H1 (cell line): ENCODE measurements at regions of chr4 and their contacts with region 1.

Region 1: GRCh38 chr4:140359562-140360427 is 13.7 kb upstream of the SCOC start:
- DNase-seq: peak; percentile 47 to 88
- H3K4me3 ChIP-seq: no peak overlapping the region
- H3K27ac ChIP-seq: no peak overlapping the region
- H3K4me1 ChIP-seq: no peaks in the 10 kb centered on the region
- H3K27me3 ChIP-seq: peaks cover 0 to 2% (median 0%) of the 10 kb centered on the region in 4 experiments; a peak in 1 of 7 replicates
- CTCF ChIP-seq: peak; percentile 66 to 91 (median 83)
- EP300 ChIP-seq: no peak
- POLR2A ChIP-seq: no peak
- RAD21 ChIP-seq: peak; percentile 63 to 68

Region 2: DNA sequence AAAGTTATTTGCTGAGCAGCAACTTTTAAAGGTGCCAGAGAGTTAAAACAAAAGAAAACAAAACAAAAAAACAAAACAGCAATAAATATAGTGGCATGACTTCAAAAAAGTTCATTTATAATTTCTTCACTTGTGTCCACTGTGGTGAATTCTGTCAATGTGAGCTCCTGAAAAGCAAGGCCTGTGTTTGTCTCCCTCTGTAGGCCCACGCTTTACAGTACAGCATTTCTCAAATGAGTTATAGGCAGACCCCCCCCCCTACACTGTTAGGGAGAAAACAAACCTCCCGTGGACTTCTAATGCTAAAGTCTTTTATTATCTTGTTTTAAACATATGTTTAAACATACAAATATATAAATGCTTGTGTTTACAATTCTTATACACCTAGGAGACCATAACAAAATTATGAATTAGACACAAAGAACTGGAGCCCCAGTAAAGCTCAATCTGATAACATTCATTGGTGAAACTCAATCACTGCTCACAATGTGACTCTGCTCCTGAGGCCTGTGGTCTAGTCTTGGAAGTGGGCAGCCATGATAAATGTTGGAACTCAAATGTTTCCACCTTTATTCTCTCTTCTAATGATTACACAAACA is 33.3 kb before region 1 on chr4:
- CTCF ChIA-PET with region 1: interaction called, 23 read pairs
- POLR2A ChIA-PET with region 1: no interaction called
- DNase-seq: no peak
- H3K4me3 ChIP-seq: no peak overlapping the region
- H3K27ac ChIP-seq: no peak overlapping the region
- H3K4me1 ChIP-seq: no peaks in the 10 kb centered on the region
- H3K27me3 ChIP-seq: no peaks in the 10 kb centered on the region
- CTCF ChIP-seq: peak; percentile 11 to 63 (median 63)
- EP300 ChIP-seq: no peak
- POLR2A ChIP-seq: no peak
- RAD21 ChIP-seq: peak; percentile 77 to 81

Region 3: GRCh38 chr4:140373328-140374129 is 13.7 kb after region 1 on chr4 and contains the start of gene SCOC:
- CTCF ChIA-PET with region 1: interaction called, 41 read pairs
- POLR2A ChIA-PET with region 1: no interaction called
- DNase-seq: peak; percentile 94 to 99
- H3K4me3 ChIP-seq: peak within 1 kb of the TSS; percentile 86 to 96 (median 92)
- H3K27ac ChIP-seq: peak within 1 kb of the TSS; percentile 74
- H3K4me1 ChIP-seq: peaks cover 0 to 4% (median 0%) of the 10 kb centered on the region in 4 experiments; a peak in 2 of 7 replicates
- H3K27me3 ChIP-seq: no peaks in the 10 kb centered on the region
- CTCF ChIP-seq: no peak
- EP300 ChIP-seq: 0 out of 3 replicates have a peak, but pooled peaks of 1 of the 2 experiments have one; percentile 6
- POLR2A ChIP-seq: peak in 1 of 2 experiments; percentile 84; a peak in 2 of 3 replicates
- RAD21 ChIP-seq: no peak
- total RNA-seq, gene SCOC: 33.1 and 33.4 TPM in 2 replicates

Region 4: DNA sequence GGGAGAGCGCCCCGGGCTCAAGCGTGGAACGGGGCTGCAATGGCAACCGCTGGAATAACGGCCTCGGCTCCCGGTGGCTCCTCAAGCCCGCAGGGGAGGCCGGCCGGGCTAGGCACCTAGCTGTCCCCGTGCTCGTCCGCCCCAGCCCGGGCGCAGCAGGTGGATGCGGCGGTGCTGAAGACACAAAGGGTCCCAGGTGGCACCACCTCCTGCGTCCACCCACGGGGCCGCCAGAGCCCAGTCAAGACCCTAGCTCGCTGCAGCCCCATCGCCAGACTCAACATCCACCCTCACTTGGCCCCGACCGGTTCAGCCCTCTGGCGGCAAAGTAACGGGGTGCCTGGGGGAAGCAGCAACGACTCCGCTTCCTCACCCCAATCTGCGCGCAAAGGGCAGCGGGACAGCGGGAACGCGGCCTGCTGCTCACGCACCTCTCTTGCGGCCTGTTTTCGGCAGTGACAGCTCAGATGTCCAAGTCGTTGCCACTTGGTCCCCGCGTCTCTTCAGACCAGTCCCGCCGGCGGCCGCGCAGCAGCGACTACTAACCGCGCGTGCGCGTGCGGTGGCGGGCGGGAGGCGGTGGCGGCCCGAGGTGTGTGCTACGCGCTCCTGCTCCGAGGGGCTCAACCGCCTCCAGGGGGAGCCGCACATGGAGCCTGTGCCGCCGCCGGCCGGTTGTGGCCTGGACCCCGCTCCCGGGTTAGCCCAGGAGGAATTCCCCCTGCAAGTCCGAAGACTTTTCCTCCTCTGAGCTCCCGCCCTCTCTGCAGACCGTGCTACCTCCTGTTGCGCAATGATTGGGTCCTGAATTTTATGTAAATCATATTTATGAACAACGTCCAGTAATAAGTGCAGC is 67.5 kb after region 1 on chr4 and contains the start of gene CLGN:
- CTCF ChIA-PET with region 1: interaction called, 12 read pairs
- POLR2A ChIA-PET with region 1: no interaction called
- DNase-seq: peak; percentile 73 to 93
- H3K4me3 ChIP-seq: peak within 1 kb of the TSS; percentile 50 to 75 (median 71)
- H3K27ac ChIP-seq: no peak within 1 kb of the TSS
- H3K4me1 ChIP-seq: no peaks in the 10 kb centered on the region; a peak in 2 of 7 replicates
- H3K27me3 ChIP-seq: peaks cover 0 to 2% (median 0%) of the 10 kb centered on the region in 4 experiments; a peak in 3 of 7 replicates
- CTCF ChIP-seq: peak; percentile 48 to 65 (median 64)
- EP300 ChIP-seq: no peak
- POLR2A ChIP-seq: no peak; a peak in 1 of 3 replicates
- RAD21 ChIP-seq: peak; percentile 33 to 50; a peak in 3 of 4 replicates
- total RNA-seq, gene CLGN: 3.1 and 3.2 TPM in 2 replicates

Region 5: GRCh38 chr4:140595065-140595464 is 235.3 kb after region 1 on chr4:
- CTCF ChIA-PET with region 1: interaction called, 13 read pairs
- POLR2A ChIA-PET with region 1: no interaction called
- DNase-seq: peak in 1 of 2 experiments; percentile 50
- H3K4me3 ChIP-seq: no peak overlapping the region
- H3K27ac ChIP-seq: no peak overlapping the region
- H3K4me1 ChIP-seq: peaks cover 0 to 2% (median 2%) of the 10 kb centered on the region in 4 experiments; a peak in 2 of 7 replicates
- H3K27me3 ChIP-seq: no peaks in the 10 kb centered on the region
- CTCF ChIP-seq: peak; percentile 62 to 84 (median 82)
- EP300 ChIP-seq: no peak
- POLR2A ChIP-seq: no peak
- RAD21 ChIP-seq: peak; percentile 88 to 91

Region 6: GRCh38 chr4:140637836-140638235 is 278.0 kb after region 1 on chr4:
- CTCF ChIA-PET with region 1: interaction called, 21 read pairs
- POLR2A ChIA-PET with region 1: no interaction called
- DNase-seq: no peak
- H3K4me3 ChIP-seq: no peak overlapping the region
- H3K27ac ChIP-seq: no peak overlapping the region
- H3K4me1 ChIP-seq: peaks cover 0 to 4% (median 3%) of the 10 kb centered on the region in 4 experiments; a peak in 5 of 7 replicates
- H3K27me3 ChIP-seq: no peaks in the 10 kb centered on the region
- CTCF ChIP-seq: peak; percentile 69 to 88 (median 75)
- EP300 ChIP-seq: no peak
- POLR2A ChIP-seq: no peak
- RAD21 ChIP-seq: peak; percentile 86 to 92

Region 7: DNA sequence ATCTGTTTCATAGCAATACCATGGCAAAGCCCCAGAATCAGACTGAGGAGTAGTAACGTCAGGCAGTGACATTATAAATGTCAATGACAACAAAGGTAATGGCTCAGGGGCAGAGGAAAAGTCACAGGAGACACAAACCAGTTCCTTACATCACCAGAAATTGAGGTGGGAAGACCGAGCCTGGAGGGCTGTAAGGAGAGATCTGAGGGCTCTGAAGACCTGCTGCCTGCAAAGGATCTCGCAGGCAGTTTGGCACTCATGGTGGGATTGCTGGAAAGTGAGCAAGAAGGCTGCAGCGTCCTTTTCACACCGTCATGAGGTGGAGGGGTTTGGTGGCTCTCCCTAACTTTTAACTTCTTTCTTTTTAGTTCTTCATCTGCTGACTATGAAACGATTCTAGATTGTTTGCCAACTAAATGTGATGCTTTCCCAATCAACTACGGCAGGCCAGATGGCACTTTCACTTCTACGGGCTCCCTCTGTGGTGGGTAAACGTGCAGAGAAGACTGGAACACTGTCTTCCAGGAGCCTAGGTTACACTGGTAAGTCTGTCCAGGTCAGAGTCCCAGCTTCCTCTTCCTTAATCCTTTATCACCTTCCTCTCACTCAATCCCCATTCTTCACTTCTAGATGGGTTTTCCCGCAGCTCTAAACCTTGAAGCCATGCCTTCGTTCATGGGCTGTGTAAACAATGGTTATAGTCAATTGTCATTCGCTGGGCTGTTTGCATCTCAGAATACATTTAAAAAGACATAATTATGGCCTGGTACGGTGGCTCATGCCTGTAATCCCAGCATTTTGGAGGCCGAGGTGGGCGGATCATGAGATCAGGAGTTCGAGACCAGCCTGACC is 338.1 kb after region 1 on chr4:
- CTCF ChIA-PET with region 1: no interaction called
- POLR2A ChIA-PET with region 1: no interaction called
- DNase-seq: no peak
- H3K4me3 ChIP-seq: no peak overlapping the region
- H3K27ac ChIP-seq: no peak overlapping the region
- H3K4me1 ChIP-seq: no peaks in the 10 kb centered on the region
- H3K27me3 ChIP-seq: no peaks in the 10 kb centered on the region; a peak in 1 of 7 replicates
- CTCF ChIP-seq: no peak
- EP300 ChIP-seq: no peak
- POLR2A ChIP-seq: no peak
- RAD21 ChIP-seq: no peak

Region 8: GRCh38 chr4:140884431-140885058 is 524.8 kb after region 1 on chr4:
- CTCF ChIA-PET with region 1: interaction called, 15 read pairs
- POLR2A ChIA-PET with region 1: no interaction called
- DNase-seq: peak; percentile 13 to 57
- H3K4me3 ChIP-seq: no peak overlapping the region
- H3K27ac ChIP-seq: no peak overlapping the region
- H3K4me1 ChIP-seq: no peaks in the 10 kb centered on the region
- H3K27me3 ChIP-seq: no peaks in the 10 kb centered on the region
- CTCF ChIP-seq: peak; percentile 30 to 86 (median 83)
- EP300 ChIP-seq: no peak
- POLR2A ChIP-seq: no peak
- RAD21 ChIP-seq: peak; percentile 88 to 93